ENCODE measurements at regions of chr11 and their contacts with region 1.

Region 1: GRCh38 chr11:86068951-86069407 is at the start of gene PICALM:
- DNase-seq: peak; percentile 94 to 97 (median 96)
- H3K4me3 ChIP-seq: peak within 1 kb of the TSS; percentile 85
- H3K4me3 Mint-ChIP-seq: peak within 1 kb of the TSS; percentile 92 to 100 (median 99)
- H3K27ac ChIP-seq: peak within 1 kb of the TSS; percentile 82
- H3K27ac Mint-ChIP-seq: peak within 1 kb of the TSS; percentile 91 to 99 (median 96)
- H3K4me1 ChIP-seq: peaks cover 17% of the 10 kb centered on the region
- H3K4me1 Mint-ChIP-seq: peaks cover 23 to 36% (median 32%) of the 10 kb centered on the region in 3 donors
- H3K27me3 ChIP-seq: no peaks in the 10 kb centered on the region
- H3K27me3 Mint-ChIP-seq: peaks cover 1 to 4% of the 10 kb centered on the region in 2 donors
- total RNA-seq, gene PICALM: 95.2 to 103 TPM

Region 2: GRCh38 chr11:85941380-85941973 is 127.5 kb before region 1 on chr11:
- CTCF ChIA-PET with region 1: no interaction called
- POLR2A ChIA-PET with region 1: no interaction called
- DNase-seq: no peak
- H3K4me3 ChIP-seq: no peak overlapping the region
- H3K4me3 Mint-ChIP-seq: no peak overlapping the region
- H3K27ac ChIP-seq: no peak overlapping the region
- H3K27ac Mint-ChIP-seq: no peak overlapping the region
- H3K4me1 ChIP-seq: no peaks in the 10 kb centered on the region
- H3K4me1 Mint-ChIP-seq: peaks cover 8 to 12% (median 11%) of the 10 kb centered on the region in 3 donors
- H3K27me3 ChIP-seq: no peaks in the 10 kb centered on the region
- H3K27me3 Mint-ChIP-seq: no peaks in the 10 kb centered on the region

Region 3: DNA sequence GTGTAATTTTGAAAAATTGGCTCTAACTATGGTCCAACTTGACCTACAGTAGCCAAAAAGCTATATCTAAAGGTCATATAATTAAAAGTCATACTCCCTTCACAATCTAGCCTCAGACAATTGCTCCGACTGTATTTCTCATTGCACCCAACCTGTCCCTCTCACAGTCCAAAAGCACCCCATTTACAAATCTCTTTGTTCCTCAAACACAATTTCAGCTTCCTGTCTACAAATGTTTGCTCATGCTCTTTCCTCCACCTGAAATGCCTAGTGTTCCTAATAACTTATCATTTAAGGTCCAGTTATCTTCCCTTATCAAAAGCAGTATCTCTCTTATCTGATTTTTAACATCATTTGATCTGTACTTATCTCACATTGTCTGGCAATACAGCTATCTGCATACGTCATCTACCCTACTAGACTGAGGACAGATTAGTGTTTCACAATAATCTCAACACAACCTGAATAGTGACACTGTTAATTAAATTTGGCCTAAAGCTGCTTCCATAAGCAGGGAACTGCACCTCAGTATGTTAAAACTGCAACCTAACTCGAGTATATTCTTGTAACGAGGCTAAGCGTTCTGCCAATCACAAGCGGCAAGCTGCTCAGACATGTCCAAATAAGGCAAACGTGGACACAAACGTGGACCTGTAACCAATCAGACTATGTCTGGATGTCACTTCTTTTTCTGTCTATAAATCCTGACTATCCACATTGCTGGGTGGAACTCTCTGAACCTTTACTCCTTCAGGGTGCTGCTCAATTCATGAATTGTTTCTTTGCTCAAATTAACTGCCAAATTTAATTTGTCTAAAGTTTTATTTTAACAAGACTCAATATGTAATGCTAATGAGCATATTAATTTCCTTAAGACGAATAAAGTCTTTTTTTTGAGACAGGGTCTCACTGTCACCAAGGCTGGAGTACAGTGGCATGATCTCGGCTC is 16.0 kb before region 1 on chr11:
- CTCF ChIA-PET with region 1: interaction called, 10 read pairs
- POLR2A ChIA-PET with region 1: interaction called, 4 read pairs
- DNase-seq: no peak
- H3K4me3 ChIP-seq: no peak overlapping the region
- H3K4me3 Mint-ChIP-seq: peak overlapping the region in 6 of 7 donors; percentile 10 to 64 (median 32)
- H3K27ac ChIP-seq: no peak overlapping the region
- H3K27ac Mint-ChIP-seq: peak overlapping the region; percentile 21 to 91 (median 60)
- H3K4me1 ChIP-seq: peaks cover 72% of the 10 kb centered on the region
- H3K4me1 Mint-ChIP-seq: peaks cover 81 to 96% (median 93%) of the 10 kb centered on the region in 3 donors
- H3K27me3 ChIP-seq: no peaks in the 10 kb centered on the region
- H3K27me3 Mint-ChIP-seq: no peaks in the 10 kb centered on the region

Region 4: DNA sequence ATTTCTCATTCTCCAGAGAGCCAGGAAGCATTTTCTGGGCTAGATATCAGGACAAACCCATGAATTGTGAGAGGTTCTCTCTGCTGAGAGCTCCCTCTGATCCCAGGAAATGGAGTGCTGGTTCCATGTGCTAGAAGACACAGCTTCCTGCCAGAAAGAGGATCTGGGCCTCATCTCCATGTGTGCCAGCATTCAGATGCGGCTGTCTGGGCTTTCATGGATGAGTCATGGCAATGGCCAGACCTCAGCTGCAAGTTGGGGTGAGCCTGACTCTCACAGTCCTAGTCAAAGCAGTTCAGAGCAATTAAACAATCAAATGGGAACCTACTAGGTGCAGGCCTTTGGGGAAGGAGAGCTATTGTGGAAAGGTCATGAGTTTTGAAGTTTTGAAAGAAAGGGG is 93.3 kb after region 1 on chr11:
- CTCF ChIA-PET with region 1: no interaction called
- POLR2A ChIA-PET with region 1: no interaction called
- DNase-seq: no peak
- H3K4me3 ChIP-seq: no peak overlapping the region
- H3K4me3 Mint-ChIP-seq: no peak overlapping the region
- H3K27ac ChIP-seq: peak overlapping the region; percentile 59
- H3K27ac Mint-ChIP-seq: no peak overlapping the region
- H3K4me1 ChIP-seq: no peaks in the 10 kb centered on the region
- H3K4me1 Mint-ChIP-seq: peaks cover 0 to 14% (median 6%) of the 10 kb centered on the region in 3 donors
- H3K27me3 ChIP-seq: no peaks in the 10 kb centered on the region
- H3K27me3 Mint-ChIP-seq: no peaks in the 10 kb centered on the region

Region 5: GRCh38 chr11:86302100-86302793 is 233.3 kb after region 1 on chr11 and contains the start of gene HIKESHI:
- CTCF ChIA-PET with region 1: no interaction called
- POLR2A ChIA-PET with region 1: interaction called, 10 read pairs
- DNase-seq: peak; percentile 81 to 93 (median 87)
- H3K4me3 ChIP-seq: peak within 1 kb of the TSS; percentile 79
- H3K4me3 Mint-ChIP-seq: peak within 1 kb of the TSS; percentile 97 to 100 (median 99)
- H3K27ac ChIP-seq: peak within 1 kb of the TSS; percentile 83
- H3K27ac Mint-ChIP-seq: peak within 1 kb of the TSS; percentile 90 to 100 (median 98)
- H3K4me1 ChIP-seq: peaks cover 18% of the 10 kb centered on the region
- H3K4me1 Mint-ChIP-seq: peaks cover 28 to 43% (median 40%) of the 10 kb centered on the region in 3 donors
- H3K27me3 ChIP-seq: no peaks in the 10 kb centered on the region
- H3K27me3 Mint-ChIP-seq: peaks cover 2 to 5% of the 10 kb centered on the region in 2 donors
- total RNA-seq, gene HIKESHI: 52.9 to 56.9 TPM